H1 (cell line): ENCODE measurements at regions of chr16 and their contacts with region 1.

Region 1: GRCh38 chr16:85916141-85916890 is 17.4 kb downstream of the IRF8 start:
- DNase-seq: no peak
- H3K4me3 ChIP-seq: no peak overlapping the region
- H3K27ac ChIP-seq: no peak overlapping the region
- H3K4me1 ChIP-seq: peaks cover 0 to 5% (median 2%) of the 10 kb centered on the region in 4 experiments; a peak in 3 of 7 replicates
- H3K27me3 ChIP-seq: peaks cover 0 to 2% (median 0%) of the 10 kb centered on the region in 4 experiments; a peak in 2 of 7 replicates
- CTCF ChIP-seq: no peak
- EP300 ChIP-seq: no peak
- POLR2A ChIP-seq: no peak
- RAD21 ChIP-seq: no peak

Region 2: GRCh38 chr16:85789773-85790172 is 126.5 kb before region 1 on chr16:
- CTCF ChIA-PET with region 1: no interaction called
- POLR2A ChIA-PET with region 1: no interaction called
- DNase-seq: no peak
- H3K4me3 ChIP-seq: no peak overlapping the region
- H3K27ac ChIP-seq: no peak overlapping the region
- H3K4me1 ChIP-seq: no peaks in the 10 kb centered on the region
- H3K27me3 ChIP-seq: no peaks in the 10 kb centered on the region
- CTCF ChIP-seq: no peak
- EP300 ChIP-seq: no peak
- POLR2A ChIP-seq: no peak
- RAD21 ChIP-seq: no peak

Region 3: DNA sequence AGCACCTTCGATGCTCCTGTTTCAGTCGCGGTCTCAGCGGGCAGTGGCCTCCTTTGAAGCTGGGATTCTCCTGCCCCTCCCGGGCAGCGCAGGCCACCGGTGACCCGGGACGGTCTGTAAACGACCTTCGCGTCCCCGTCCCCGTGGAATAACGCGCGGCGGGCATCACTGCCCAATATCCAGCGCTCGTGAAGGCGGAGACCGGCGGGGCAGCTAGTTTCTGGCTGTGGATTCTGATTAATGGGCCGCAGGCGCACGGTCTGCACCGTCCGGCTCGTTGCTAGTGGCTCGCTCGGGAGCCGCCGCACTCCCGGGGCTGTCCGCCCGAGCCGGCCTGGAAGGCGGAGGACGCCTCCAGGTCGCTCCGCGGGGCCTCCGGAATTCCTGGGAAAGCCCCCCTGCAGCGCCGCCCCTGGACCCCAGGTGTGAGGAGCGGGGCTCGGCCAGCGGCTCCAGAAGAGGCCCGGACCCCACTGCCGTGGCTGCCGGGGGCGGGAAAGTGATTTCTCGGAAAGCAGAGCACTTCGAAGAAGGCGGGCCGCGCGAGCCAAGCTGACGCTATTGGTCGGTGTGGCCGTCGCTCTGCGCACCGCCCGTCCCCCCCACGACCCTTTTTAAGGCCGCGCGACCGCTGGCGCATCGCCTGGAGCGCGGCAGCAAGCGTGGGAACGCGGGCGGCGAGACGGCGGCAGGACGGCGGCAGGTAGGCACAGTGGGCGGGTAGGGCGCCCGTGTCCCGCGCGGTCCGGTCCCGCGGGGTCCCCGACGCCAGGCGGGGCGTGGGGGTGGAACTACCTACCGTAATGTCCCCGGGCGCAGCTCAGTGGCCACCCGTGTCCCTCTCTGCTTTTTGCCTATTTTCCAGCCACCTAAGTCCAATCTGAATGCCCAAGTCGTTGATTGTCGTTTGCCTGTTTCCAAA is 17.5 kb before region 1 on chr16 and contains the start of gene IRF8:
- CTCF ChIA-PET with region 1: interaction called, 11 read pairs
- POLR2A ChIA-PET with region 1: no interaction called
- DNase-seq: peak in 1 of 2 experiments; percentile 84
- H3K4me3 ChIP-seq: peak within 1 kb of the TSS; percentile 41 to 68 (median 56)
- H3K27ac ChIP-seq: no peak within 1 kb of the TSS
- H3K4me1 ChIP-seq: no peaks in the 10 kb centered on the region
- H3K27me3 ChIP-seq: peaks cover 11 to 46% (median 31%) of the 10 kb centered on the region in 4 experiments
- CTCF ChIP-seq: no peak
- EP300 ChIP-seq: no peak
- POLR2A ChIP-seq: no peak
- RAD21 ChIP-seq: no peak
- total RNA-seq, gene IRF8: 0.96 and 2.0 TPM in 2 replicates

Region 4: DNA sequence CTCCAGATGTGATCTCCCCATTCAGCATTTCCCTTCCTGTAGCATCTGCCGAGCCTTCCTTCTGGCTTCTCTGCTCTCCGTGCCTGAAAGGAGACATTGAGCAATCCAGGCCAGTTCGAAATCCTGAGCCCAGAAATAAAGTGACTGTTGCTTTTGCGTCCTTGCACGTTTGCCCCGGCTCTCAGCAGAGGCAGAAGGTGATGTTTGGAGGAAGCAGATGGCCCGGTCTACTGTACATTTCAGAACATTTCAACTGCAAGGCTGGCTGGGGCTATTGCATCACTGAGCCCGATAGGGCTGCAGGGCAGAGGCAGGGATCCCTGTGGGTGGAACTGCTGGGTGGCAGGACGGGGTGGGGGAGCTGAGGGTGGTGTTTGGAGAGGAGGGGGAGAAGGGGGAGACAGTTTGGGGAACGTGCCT is 12.1 kb after region 1 on chr16:
- CTCF ChIA-PET with region 1: interaction called, 52 read pairs
- POLR2A ChIA-PET with region 1: interaction called, 3 read pairs
- DNase-seq: no peak
- H3K4me3 ChIP-seq: no peak overlapping the region
- H3K27ac ChIP-seq: no peak overlapping the region
- H3K4me1 ChIP-seq: no peaks in the 10 kb centered on the region; a peak in 1 of 7 replicates
- H3K27me3 ChIP-seq: 0 out of 7 replicates have a peak, but pooled peaks cover 0 to 2% (median 0%) of the 10 kb centered on the region in 4 experiments
- CTCF ChIP-seq: no peak
- EP300 ChIP-seq: no peak
- POLR2A ChIP-seq: no peak
- RAD21 ChIP-seq: no peak

Region 5: DNA sequence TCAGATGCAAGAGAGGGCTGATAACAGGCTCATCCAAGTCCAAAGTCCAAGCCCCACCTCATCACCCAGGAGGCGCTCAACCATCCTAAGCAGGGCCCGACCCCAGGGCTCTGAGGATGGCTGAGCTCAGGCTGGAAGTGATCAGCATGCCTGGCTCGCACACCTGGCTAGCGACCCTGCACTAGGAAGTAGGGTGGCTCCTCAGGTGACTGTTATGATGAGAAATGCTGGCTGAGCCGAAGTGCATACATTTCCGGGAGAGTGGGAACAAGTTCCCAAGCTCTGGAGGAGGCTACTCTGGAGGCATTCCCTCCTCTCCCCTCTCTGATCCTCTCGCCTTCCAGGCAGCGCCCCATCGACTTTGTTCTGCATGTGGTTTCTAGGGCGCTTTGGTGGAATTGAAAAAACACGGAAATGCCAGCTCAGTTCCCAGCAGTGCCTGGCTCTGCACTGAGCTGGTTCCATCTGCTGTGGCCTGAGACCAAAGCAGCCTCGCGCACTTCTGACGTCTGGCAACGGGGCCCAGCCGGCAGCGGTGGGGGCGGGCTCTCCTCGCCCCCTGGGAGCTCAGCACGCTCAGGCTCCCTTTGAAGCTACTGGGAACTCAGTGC is 112.9 kb after region 1 on chr16:
- CTCF ChIA-PET with region 1: no interaction called
- POLR2A ChIA-PET with region 1: no interaction called
- DNase-seq: no peak
- H3K4me3 ChIP-seq: no peak overlapping the region
- H3K27ac ChIP-seq: no peak overlapping the region; the same call in 1 of the 2 replicates
- H3K4me1 ChIP-seq: peaks cover 0 to 13% (median 7%) of the 10 kb centered on the region in 4 experiments; a peak in 6 of 7 replicates
- H3K27me3 ChIP-seq: peaks cover 0 to 3% (median 0%) of the 10 kb centered on the region in 4 experiments; a peak in 2 of 7 replicates
- CTCF ChIP-seq: no peak
- EP300 ChIP-seq: no peak
- POLR2A ChIP-seq: no peak
- RAD21 ChIP-seq: no peak